ENCODE measurements at regions of chr5 and their contacts with region 1.

Region 1: DNA sequence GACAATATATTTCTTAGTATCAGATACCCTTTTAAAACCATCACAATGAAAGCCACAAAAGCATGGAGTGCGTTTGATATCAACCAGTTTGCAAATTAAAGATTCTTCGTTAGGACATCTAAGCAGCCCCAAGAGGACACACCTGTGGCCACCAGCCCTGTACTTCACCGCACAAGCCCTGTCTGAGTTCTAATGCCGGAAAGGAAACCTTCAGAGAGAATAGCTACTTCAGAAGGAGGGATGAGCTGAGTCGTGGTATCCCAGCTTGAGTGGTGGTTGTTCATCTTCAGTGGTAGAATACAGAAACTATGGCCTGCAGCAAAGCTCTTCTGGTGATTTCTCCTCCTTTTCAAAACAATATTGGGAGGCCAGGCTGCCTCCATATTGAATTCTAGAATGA is 319.6 kb downstream of the FBXL7 start:
- DNase-seq: no peak
- ATAC-seq: no peak
- H3K4me3 ChIP-seq: no peak overlapping the region
- H3K4me3 Mint-ChIP-seq: no peak overlapping the region
- H3K27ac ChIP-seq: no peak overlapping the region
- H3K27ac Mint-ChIP-seq: no peak overlapping the region
- H3K4me1 ChIP-seq: no peaks in the 10 kb centered on the region
- H3K4me1 Mint-ChIP-seq: no peaks in the 10 kb centered on the region
- H3K27me3 ChIP-seq: no peaks in the 10 kb centered on the region
- H3K27me3 Mint-ChIP-seq: no peaks in the 10 kb centered on the region
- CTCF ChIP-seq: no peak

Region 2: GRCh38 chr5:14534773-14535172 is 1284.8 kb before region 1 on chr5:
- CTCF ChIA-PET with region 1: no interaction called
- POLR2A ChIA-PET with region 1: no interaction called
- intact Hi-C with region 1: no loop called
- DNase-seq: no peak
- ATAC-seq: no peak
- H3K4me3 ChIP-seq: no peak overlapping the region
- H3K4me3 Mint-ChIP-seq: no peak overlapping the region
- H3K27ac ChIP-seq: no peak overlapping the region
- H3K27ac Mint-ChIP-seq: no peak overlapping the region
- H3K4me1 ChIP-seq: no peaks in the 10 kb centered on the region
- H3K4me1 Mint-ChIP-seq: no peaks in the 10 kb centered on the region
- H3K27me3 ChIP-seq: no peaks in the 10 kb centered on the region
- H3K27me3 Mint-ChIP-seq: no peaks in the 10 kb centered on the region
- CTCF ChIP-seq: no peak

Region 3: GRCh38 chr5:15334551-15335266 is 484.9 kb before region 1 on chr5:
- CTCF ChIA-PET with region 1: no interaction called
- POLR2A ChIA-PET with region 1: no interaction called
- intact Hi-C with region 1: loop called in 1 of 2 experiments (anchors 5 kb)
- DNase-seq: no peak
- ATAC-seq: no peak
- H3K4me3 ChIP-seq: no peak overlapping the region
- H3K4me3 Mint-ChIP-seq: no peak overlapping the region
- H3K27ac ChIP-seq: no peak overlapping the region
- H3K27ac Mint-ChIP-seq: no peak overlapping the region
- H3K4me1 ChIP-seq: no peaks in the 10 kb centered on the region
- H3K4me1 Mint-ChIP-seq: no peaks in the 10 kb centered on the region
- H3K27me3 ChIP-seq: no peaks in the 10 kb centered on the region
- H3K27me3 Mint-ChIP-seq: no peaks in the 10 kb centered on the region
- CTCF ChIP-seq: no peak